ENCODE measurements at regions of chr3 and their contacts with region 1.

Region 1: GRCh38 chr3:56997675-56998074 is 62.8 kb upstream of the SPATA12 start:
- DNase-seq: no peak
- H3K4me3 ChIP-seq: no peak overlapping the region
- H3K27ac ChIP-seq: peak overlapping the region in 39 of 59 donors; percentile 9 to 90 (median 72)
- H3K27me3 ChIP-seq: no peaks in the 10 kb centered on the region
- CTCF ChIP-seq: peak in 1 of 56 donors; percentile 7

Region 2: DNA sequence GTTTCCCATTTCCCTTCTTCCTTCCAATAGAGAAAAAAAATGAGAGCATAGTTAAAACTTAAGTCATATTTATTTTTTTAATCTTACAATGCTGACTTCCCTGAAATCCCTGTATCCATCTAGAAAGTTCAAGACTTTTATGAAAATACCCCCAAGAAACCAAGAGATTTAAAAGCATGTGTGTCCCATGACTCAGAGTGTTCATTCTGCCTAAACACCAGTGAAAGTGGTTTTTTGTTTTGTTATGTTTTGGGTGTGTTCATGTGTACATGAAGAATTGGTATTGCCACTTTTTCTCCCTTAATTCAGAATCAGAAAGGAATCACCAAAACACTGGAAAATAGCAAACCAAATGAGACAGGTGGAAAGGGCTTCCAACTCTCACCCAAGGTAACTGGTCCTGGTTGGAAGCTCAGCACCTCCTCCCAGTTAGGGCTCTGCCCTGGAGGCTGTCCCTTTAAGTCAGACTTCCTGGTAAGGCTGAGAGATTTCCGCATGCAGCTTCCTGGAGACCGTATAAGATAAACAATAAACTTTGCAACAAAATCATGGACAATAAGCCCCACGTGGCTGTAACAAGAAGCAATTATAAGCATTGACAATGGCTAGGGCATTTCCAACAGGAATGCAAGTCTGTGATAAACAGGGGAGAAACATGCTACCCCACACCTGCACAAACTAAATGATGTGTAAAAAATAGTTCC is 74.0 kb before region 1 on chr3:
- intact Hi-C with region 1: no loop called
- DNase-seq: no peak
- H3K4me3 ChIP-seq: no peak overlapping the region
- H3K27ac ChIP-seq: peak overlapping the region in 33 of 59 donors; percentile 1 to 74 (median 39)
- H3K27me3 ChIP-seq: no peaks in the 10 kb centered on the region
- CTCF ChIP-seq: no peak

Region 3: DNA sequence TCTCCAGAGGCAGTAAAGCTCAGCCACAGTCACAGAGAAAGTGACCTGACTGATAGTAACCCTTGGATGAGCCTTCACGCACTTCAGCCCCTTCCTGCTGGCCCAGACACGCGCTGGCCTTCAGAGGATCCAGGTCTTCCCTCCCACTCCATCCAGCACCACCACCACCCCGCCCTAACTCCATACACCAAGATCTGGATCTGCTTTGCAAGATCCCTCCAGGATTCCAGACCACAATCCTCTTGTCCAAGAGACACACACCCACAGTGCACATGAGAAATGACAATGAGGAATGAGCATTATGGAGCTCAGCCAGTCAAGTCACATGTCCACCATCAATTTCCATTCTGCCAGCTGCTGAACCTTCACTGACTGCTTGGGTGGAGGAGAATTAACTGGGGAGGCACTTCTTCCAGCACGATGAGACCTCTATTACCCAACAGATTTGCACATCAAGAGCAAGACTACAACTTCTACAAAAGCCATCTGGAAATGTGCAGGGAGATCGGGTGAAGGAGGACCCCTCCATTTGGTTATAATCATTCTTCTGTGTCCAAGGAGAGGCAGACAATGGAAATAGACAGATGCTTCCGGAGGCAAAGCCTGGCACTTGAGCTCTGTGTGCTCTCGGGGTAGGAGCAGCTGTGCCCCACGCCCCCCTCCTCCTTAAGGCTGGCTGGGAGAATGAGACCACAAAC is 50.4 kb after region 1 on chr3:
- intact Hi-C with region 1: loop called in 1 of 2 experiments (anchors 5 kb)
- DNase-seq: peak in 2 of 10 donors; percentile 29 to 41
- H3K4me3 ChIP-seq: peak overlapping the region in 12 of 59 donors; percentile 1 to 44 (median 20)
- H3K27ac ChIP-seq: peak overlapping the region in 7 of 59 donors; percentile 30 to 69 (median 42)
- H3K27me3 ChIP-seq: no peaks in the 10 kb centered on the region
- CTCF ChIP-seq: no peak

Region 4: GRCh38 chr3:57086201-57086600 is 88.5 kb after region 1 on chr3:
- intact Hi-C with region 1: loop called in 1 of 2 experiments (anchors 2 kb)
- DNase-seq: no peak
- H3K4me3 ChIP-seq: no peak overlapping the region
- H3K27ac ChIP-seq: peak overlapping the region in 35 of 59 donors; percentile 1 to 82 (median 59)
- H3K27me3 ChIP-seq: no peaks in the 10 kb centered on the region
- CTCF ChIP-seq: peak in 1 of 56 donors; percentile 4

Region 5: GRCh38 chr3:57169872-57170623 is 172.4 kb after region 1 on chr3:
- intact Hi-C with region 1: loop called (anchors 5 to 10 kb)
- DNase-seq: peak in 9 of 10 donors; percentile 44 to 79 (median 64)
- H3K4me3 ChIP-seq: peak overlapping the region; percentile 23 to 69 (median 51)
- H3K27ac ChIP-seq: peak overlapping the region in 3 of 59 donors; percentile 8 to 52 (median 17)
- H3K27me3 ChIP-seq: peaks cover 0 to 12% (median 0%) of the 10 kb centered on the region in 45 donors
- CTCF ChIP-seq: peak; percentile 66 to 90 (median 84)

Region 6: DNA sequence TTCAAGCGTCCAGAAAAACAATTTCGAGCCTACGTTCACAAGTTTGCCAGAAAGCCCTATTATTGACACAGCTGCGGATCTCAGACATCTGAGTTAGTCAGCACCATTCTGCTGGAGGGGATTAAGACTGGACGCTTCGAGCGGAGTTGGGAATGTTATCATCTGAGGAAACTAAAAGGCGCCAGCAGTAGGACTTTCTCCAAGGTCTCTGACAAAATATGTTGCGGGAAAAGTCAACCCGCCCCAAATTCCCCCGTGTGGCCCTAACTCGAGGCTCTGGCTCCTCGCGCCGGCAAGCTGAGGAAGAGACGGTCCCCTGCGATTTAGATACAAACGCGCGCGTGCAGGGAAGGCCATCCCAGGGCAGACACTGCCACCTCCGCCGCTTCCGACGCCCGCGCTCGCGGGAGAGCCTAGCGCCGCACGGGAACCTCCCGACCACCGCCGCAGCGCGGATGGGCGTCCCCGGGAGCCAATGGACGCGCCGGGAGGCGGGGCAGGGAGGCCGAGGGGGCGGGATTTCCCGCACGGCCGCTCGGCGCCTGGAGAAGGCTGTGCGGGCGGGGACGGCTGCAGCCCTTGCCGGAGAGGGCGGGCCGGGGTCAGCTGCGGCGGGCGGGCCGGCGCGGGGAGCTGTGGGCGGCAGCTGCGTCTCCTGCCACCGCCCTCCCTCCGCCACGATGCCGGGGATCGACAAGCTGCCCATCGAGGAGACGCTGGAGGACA is 229.7 kb after region 1 on chr3 and contains the start of gene APPL1:
- intact Hi-C with region 1: loop called (anchors 5 kb)
- DNase-seq: peak; percentile 83 to 98 (median 90)
- H3K4me3 ChIP-seq: peak within 1 kb of the TSS; percentile 71 to 97 (median 84)
- H3K27ac ChIP-seq: peak within 1 kb of the TSS; percentile 20 to 97 (median 89)
- H3K27me3 ChIP-seq: no peaks in the 10 kb centered on the region
- CTCF ChIP-seq: peak in 20 of 56 donors; percentile 3 to 56 (median 23)
- total RNA-seq, gene APPL1: 40.9 to 68.5 (median 56.2) TPM

Region 7: DNA sequence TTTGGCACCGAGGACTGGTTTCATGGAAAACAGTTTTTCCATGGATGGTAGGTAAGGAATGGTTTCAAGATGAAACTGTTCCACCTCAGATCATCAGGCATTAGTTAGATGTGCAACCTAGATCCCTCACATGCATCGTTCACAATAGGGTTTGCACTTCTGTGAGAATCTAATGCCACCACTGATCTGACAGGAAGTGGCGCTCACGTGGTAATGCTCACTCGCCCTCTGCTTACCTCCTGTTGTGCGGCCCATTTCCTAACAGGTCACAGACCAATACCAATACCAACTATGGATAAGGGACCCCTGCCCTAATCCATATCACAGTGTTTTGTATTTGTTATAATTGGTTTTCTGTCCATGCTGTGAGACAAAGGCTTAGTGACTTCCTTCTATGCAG is 817.4 kb after region 1 on chr3:
- intact Hi-C with region 1: no loop called
- DNase-seq: no peak
- H3K4me3 ChIP-seq: no peak overlapping the region
- H3K27ac ChIP-seq: no peak overlapping the region
- H3K27me3 ChIP-seq: no peaks in the 10 kb centered on the region
- CTCF ChIP-seq: no peak